CD4-positive, alpha-beta T cell (primary cell): ENCODE measurements at regions of chr7 and their contacts with region 1.

Region 1: DNA sequence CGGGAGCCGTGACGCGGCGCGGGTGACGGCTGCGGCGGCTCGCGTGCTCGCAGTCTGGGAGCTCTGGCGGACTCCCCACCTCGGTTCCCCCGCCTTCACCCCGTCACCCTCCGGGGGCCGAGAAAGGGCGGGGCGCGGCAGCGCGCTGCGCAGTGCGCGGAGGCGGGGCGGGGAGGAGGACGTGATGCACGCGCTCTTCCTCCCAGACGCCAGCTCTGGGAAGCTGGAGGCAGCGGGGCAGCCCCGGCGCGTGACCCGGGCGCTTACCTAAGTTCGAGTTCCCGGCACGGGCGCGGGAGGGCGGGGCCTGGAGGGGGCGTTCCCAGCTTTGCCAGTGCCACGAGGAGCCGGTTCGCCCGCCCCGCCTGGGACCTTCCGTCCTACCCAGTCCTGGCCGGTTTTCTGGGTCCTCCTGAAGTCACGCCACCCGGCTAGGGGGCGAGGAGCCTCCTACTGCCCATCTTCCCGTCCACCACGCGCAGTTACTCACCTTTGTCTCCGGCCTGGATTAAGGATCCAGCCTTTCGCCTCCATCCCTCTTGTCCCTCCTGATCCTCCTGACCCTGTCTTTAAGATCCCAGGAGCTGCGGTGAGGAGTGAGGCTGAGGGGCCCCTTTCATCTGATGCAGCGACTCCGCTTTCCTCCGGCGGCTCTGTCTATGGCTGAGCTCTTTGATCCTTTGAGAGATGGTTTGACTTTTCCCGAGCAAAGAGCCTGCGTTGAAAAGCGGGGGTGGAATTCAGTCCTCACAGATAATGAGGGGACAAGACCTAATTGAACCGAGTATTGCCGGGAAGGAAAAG is 470 bp upstream of the NAMPT start:
- DNase-seq: peak; percentile 92 to 100 (median 97)
- ATAC-seq: peak; percentile 88
- H3K4me3 ChIP-seq: peak overlapping the region; percentile 75
- H3K4me3 Mint-ChIP-seq: peak overlapping the region; percentile 99
- H3K27ac ChIP-seq: peak overlapping the region; percentile 84 to 91
- H3K27ac Mint-ChIP-seq: peak overlapping the region; percentile 94
- H3K4me1 ChIP-seq: peaks cover 9% of the 10 kb centered on the region
- H3K4me1 Mint-ChIP-seq: peaks cover 37% of the 10 kb centered on the region
- H3K27me3 ChIP-seq: no peaks in the 10 kb centered on the region
- H3K27me3 Mint-ChIP-seq: no peaks in the 10 kb centered on the region
- CTCF ChIP-seq: no peak

Region 2: GRCh38 chr7:105388373-105389087 is 896.7 kb before region 1 on chr7 and contains the start of gene SRPK2:
- CTCF ChIA-PET with region 1: no interaction called
- POLR2A ChIA-PET with region 1: no interaction called
- intact Hi-C with region 1: loop called in 1 of 2 experiments (anchors 10 kb)
- DNase-seq: peak; percentile 54 to 88 (median 74)
- ATAC-seq: peak; percentile 84
- H3K4me3 ChIP-seq: peak within 1 kb of the TSS; percentile 63
- H3K4me3 Mint-ChIP-seq: peak within 1 kb of the TSS; percentile 100
- H3K27ac ChIP-seq: peak within 1 kb of the TSS in 1 of 2 donors; percentile 31
- H3K27ac Mint-ChIP-seq: peak within 1 kb of the TSS; percentile 93
- H3K4me1 ChIP-seq: peaks cover 23% of the 10 kb centered on the region
- H3K4me1 Mint-ChIP-seq: peaks cover 51% of the 10 kb centered on the region
- H3K27me3 ChIP-seq: no peaks in the 10 kb centered on the region
- H3K27me3 Mint-ChIP-seq: no peaks in the 10 kb centered on the region
- CTCF ChIP-seq: no peak
- total RNA-seq, gene SRPK2: 39.9 to 40.9 TPM

Region 3: GRCh38 chr7:105691733-105692564 is 593.3 kb before region 1 on chr7:
- CTCF ChIA-PET with region 1: no interaction called
- POLR2A ChIA-PET with region 1: interaction called, 8 read pairs
- intact Hi-C with region 1: loop called in 1 of 2 experiments (anchors 10 kb)
- DNase-seq: peak; percentile 50 to 94 (median 68)
- ATAC-seq: peak; percentile 82
- H3K4me3 ChIP-seq: peak overlapping the region; percentile 92
- H3K4me3 Mint-ChIP-seq: peak overlapping the region; percentile 87
- H3K27ac ChIP-seq: peak overlapping the region; percentile 94 to 97
- H3K27ac Mint-ChIP-seq: peak overlapping the region; percentile 98
- H3K4me1 ChIP-seq: peaks cover 53% of the 10 kb centered on the region
- H3K4me1 Mint-ChIP-seq: peaks cover 62% of the 10 kb centered on the region
- H3K27me3 ChIP-seq: no peaks in the 10 kb centered on the region
- H3K27me3 Mint-ChIP-seq: no peaks in the 10 kb centered on the region
- CTCF ChIP-seq: no peak

Region 4: GRCh38 chr7:106346678-106347217 is 61.5 kb after region 1 on chr7:
- CTCF ChIA-PET with region 1: no interaction called
- POLR2A ChIA-PET with region 1: interaction called, 11 read pairs
- intact Hi-C with region 1: loop called in 1 of 2 experiments (anchors 5 kb)
- DNase-seq: peak in 8 of 14 experiments; percentile 17 to 90 (median 28)
- ATAC-seq: peak; percentile 88
- H3K4me3 ChIP-seq: no peak overlapping the region
- H3K4me3 Mint-ChIP-seq: peak overlapping the region; percentile 12
- H3K27ac ChIP-seq: no peak overlapping the region
- H3K27ac Mint-ChIP-seq: peak overlapping the region; percentile 57
- H3K4me1 ChIP-seq: peaks cover 6% of the 10 kb centered on the region
- H3K4me1 Mint-ChIP-seq: peaks cover 21% of the 10 kb centered on the region
- H3K27me3 ChIP-seq: no peaks in the 10 kb centered on the region
- H3K27me3 Mint-ChIP-seq: peaks cover 51% of the 10 kb centered on the region
- CTCF ChIP-seq: no peak

Region 5: GRCh38 chr7:107563775-107564552 is 1278.7 kb after region 1 on chr7 and contains the starts of genes COG5 and DUS4L:
- CTCF ChIA-PET with region 1: no interaction called
- POLR2A ChIA-PET with region 1: no interaction called
- intact Hi-C with region 1: loop called in 1 of 2 experiments (anchors 10 kb)
- DNase-seq: peak; percentile 69 to 94 (median 80)
- ATAC-seq: peak; percentile 85
- H3K4me3 ChIP-seq: peak within 1 kb of the TSS; percentile 83
- H3K4me3 Mint-ChIP-seq: peak within 1 kb of the TSS; percentile 93
- H3K27ac ChIP-seq: peak within 1 kb of the TSS; percentile 87 to 90
- H3K27ac Mint-ChIP-seq: peak within 1 kb of the TSS; percentile 94
- H3K4me1 ChIP-seq: peaks cover 35% of the 10 kb centered on the region
- H3K4me1 Mint-ChIP-seq: peaks cover 70% of the 10 kb centered on the region
- H3K27me3 ChIP-seq: no peaks in the 10 kb centered on the region
- H3K27me3 Mint-ChIP-seq: no peaks in the 10 kb centered on the region
- CTCF ChIP-seq: no peak
- total RNA-seq, gene COG5: 43.4 to 44.5 TPM
- total RNA-seq, gene DUS4L: 14.3 to 14.4 TPM